Activated CD4-positive, alpha-beta memory T cell treated with anti-CD3 and anti-CD28 coated beads for 36 hours (primary cell): ENCODE measurements at regions of chr1 and their contacts with region 1.

Region 1: DNA sequence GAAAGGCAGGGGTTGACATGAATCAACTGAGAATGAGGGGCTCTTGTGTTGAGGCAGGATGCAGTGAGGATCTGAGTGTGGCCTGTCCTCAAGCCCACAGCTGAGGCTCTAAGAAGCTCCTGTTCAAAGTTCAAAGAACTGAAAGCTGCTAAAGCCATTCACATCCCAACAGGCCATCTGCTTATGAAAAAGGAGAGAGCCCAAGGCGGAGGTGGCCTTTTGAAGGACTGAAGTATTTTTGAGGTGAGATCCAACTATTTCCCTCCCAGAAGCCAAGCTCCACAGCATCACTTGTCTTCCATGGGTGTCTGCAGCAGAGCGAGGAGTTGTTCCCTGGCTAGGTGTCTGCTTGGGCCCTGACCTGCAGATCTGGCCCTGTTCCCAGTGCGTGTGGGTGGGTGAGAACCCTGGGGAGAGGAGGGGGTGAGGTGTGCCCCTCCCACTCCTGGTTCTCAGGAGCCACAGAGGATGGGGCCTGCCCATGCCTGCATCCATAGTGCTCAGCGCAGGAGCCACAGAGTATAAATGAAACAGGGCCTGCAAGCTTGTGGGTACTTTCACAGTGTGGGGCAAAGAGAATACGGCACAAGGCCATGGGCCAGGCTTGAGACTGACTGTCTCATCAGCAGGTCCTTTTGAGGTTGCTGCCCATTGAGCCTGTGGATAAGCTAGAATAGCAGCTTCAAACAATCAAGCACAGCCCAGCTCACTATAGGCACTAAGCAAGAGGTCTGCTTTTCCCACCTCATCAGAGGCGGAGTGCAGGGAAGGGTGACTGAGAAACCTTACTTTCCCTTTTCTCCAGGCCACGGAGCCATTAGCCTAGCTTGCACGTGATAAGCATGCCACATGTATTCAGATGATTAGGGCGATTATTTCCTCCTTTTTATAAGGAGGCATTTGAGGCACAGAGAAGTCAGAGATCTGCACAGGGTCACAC is 15.7 kb downstream of the REG4 start:
- DNase-seq: no peak
- H3K4me3 Mint-ChIP-seq: no peak overlapping the region
- H3K27ac Mint-ChIP-seq: no peak overlapping the region
- H3K4me1 Mint-ChIP-seq: no peaks in the 10 kb centered on the region
- H3K27me3 Mint-ChIP-seq: no peaks in the 10 kb centered on the region

Region 2: GRCh38 chr1:118275472-118276115 is 1519.9 kb before region 1 on chr1:
- CTCF ChIA-PET with region 1: no interaction called
- POLR2A ChIA-PET with region 1: no interaction called
- intact Hi-C with region 1: no loop called
- DNase-seq: no peak
- H3K4me3 Mint-ChIP-seq: no peak overlapping the region
- H3K27ac Mint-ChIP-seq: no peak overlapping the region
- H3K4me1 Mint-ChIP-seq: no peaks in the 10 kb centered on the region
- H3K27me3 Mint-ChIP-seq: no peaks in the 10 kb centered on the region

Region 3: DNA sequence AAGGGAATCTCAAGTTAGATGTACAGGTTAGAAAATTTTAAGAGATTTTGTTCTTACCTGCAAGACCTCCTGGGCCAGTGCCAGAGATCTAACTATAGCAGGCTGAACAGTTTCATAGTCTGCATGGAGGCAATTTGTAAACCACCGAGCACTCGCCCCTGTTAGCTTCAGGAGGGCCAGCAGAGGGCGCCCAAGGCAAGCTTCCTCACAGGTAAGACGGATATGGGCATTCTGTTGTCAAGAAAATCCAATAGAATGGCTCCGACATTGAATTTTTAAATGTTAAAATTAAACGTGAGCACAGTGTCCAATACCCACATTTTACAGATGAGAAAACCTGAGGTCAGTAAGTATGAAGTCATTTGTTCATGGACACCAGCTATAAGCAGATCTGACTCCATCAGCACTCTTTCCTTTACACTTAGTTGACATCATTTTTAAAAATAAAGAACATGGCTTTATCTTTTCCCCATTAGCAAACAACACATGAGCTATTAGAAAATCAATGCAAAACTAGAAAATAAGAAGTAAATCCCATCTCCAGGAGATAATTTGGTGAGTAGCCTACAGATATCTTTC is 13.5 kb after region 1 on chr1:
- CTCF ChIA-PET with region 1: interaction called, 29 read pairs
- POLR2A ChIA-PET with region 1: no interaction called
- intact Hi-C with region 1: no loop called
- DNase-seq: peak; percentile 78
- H3K4me3 Mint-ChIP-seq: no peak overlapping the region
- H3K27ac Mint-ChIP-seq: no peak overlapping the region
- H3K4me1 Mint-ChIP-seq: peaks cover 4% of the 10 kb centered on the region
- H3K27me3 Mint-ChIP-seq: peaks cover 16% of the 10 kb centered on the region